ENCODE measurements at regions of chr11 and their contacts with region 1.

Region 1: DNA sequence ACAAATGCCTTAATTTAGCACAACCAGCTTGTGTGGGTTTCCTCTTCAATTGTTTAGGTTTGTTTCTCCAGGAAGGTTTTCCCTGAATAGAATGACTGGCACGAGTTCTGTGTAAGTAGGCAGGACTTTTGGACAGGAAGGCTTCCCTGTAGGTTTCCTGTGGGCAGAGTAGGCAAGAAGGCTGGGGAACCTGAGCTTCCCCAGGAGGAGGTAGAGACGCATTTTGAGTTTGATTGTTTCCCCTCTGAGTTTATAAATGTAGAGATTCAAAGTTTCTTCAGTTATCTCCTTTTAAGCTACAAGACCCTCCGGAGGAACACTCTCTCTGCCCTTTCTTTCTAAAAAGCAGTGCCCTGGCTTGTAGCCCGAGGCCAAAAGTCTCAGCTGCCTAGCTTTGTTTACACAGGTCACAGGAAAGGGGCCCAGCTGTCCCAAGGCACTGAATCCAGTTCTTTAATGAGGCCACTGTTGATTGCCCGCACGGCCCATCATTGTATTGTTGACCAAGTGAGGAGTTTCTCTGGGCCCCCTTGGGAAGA is 66.6 kb upstream of the RDX start:
- DNase-seq: no peak
- ATAC-seq: peak; percentile 73
- H3K4me3 ChIP-seq: no peak overlapping the region
- H3K27ac ChIP-seq: peak overlapping the region; percentile 62; the same call in 1 of the 2 replicates
- H3K4me1 ChIP-seq: peaks cover 7% of the 10 kb centered on the region
- H3K27me3 ChIP-seq: no peaks in the 10 kb centered on the region
- CTCF ChIP-seq: no peak
- EP300 ChIP-seq: no peak
- POLR2A ChIP-seq: no peak
- RAD21 ChIP-seq: no peak

Region 2: DNA sequence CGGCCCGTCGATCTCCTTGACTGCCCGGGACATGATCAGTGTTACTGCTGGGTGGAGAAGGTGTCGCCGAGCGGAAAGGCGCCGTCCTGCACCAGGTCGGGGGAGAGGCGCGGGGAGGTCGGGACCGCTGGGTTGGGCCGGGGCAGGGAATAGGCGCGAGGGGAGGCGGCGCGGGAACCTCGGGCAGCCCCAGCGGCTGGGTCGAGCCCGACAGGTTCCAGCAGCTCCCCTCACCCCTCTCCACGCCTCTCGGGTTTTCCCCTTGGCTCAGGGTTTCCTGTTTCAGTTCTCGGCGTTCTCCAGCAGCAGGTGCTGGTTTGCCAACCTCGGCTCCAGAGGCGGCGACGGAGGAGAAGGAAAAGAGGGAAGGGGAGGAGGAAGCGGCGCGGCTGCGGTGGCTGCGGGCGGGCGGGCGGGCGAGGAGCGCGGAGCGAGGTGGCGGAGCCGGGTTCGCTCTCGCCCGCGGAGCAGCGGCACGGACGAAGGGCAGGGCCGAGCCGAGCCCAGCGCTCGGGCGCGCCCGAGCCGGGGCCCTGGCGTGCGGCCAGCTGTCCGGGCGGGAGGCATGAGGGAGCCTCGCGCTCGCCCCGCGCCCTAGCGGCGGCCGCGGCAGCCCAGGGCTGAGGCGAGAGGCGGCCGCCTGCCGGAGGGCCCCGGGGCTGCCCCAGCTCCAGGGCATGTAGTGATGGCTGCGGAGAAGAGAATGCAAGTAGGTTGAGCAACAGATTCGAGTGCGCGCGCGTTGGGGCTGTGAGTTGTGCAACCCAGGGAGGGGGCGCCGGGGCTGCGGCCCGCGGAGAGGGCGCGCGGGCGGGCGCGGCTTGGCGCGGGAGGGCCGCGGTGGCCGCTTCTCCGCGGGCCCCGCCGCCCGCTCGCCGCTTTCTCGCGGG is 270.3 kb before region 1 on chr11 and contains the start of gene ZC3H12C:
- CTCF ChIA-PET with region 1: no interaction called
- POLR2A ChIA-PET with region 1: no interaction called
- RAD21 ChIA-PET with region 1: no interaction called
- SMC1A ChIA-PET with region 1: no interaction called
- in situ Hi-C with region 1: no loop called
- intact Hi-C with region 1: no loop called
- DNase-seq: no peak
- ATAC-seq: peak; percentile 60
- H3K4me3 ChIP-seq: peak within 1 kb of the TSS; percentile 72
- H3K27ac ChIP-seq: peak within 1 kb of the TSS; percentile 75
- H3K4me1 ChIP-seq: peaks cover 21% of the 10 kb centered on the region
- H3K27me3 ChIP-seq: no peaks in the 10 kb centered on the region
- CTCF ChIP-seq: peak; percentile 19 to 44 (median 40); a peak in 5 of 6 replicates
- EP300 ChIP-seq: peak; percentile 58 to 63; a peak in 2 of 4 replicates
- POLR2A ChIP-seq: peak; percentile 80
- RAD21 ChIP-seq: peak; percentile 49
- polyA plus RNA-seq, gene ZC3H12C: 0.31 to 0.68 TPM

Region 3: GRCh38 chr11:110207123-110207522 is 155.9 kb before region 1 on chr11:
- CTCF ChIA-PET with region 1: interaction called, 68 read pairs
- POLR2A ChIA-PET with region 1: no interaction called
- RAD21 ChIA-PET with region 1: interaction called, 58 read pairs
- SMC1A ChIA-PET with region 1: interaction called, 109 read pairs
- in situ Hi-C with region 1: no loop called
- intact Hi-C with region 1: no loop called
- DNase-seq: no peak
- ATAC-seq: no peak
- H3K4me3 ChIP-seq: no peak overlapping the region
- H3K27ac ChIP-seq: no peak overlapping the region
- H3K4me1 ChIP-seq: no peaks in the 10 kb centered on the region
- H3K27me3 ChIP-seq: no peaks in the 10 kb centered on the region
- CTCF ChIP-seq: no peak
- EP300 ChIP-seq: no peak
- POLR2A ChIP-seq: no peak
- RAD21 ChIP-seq: no peak

Region 4: DNA sequence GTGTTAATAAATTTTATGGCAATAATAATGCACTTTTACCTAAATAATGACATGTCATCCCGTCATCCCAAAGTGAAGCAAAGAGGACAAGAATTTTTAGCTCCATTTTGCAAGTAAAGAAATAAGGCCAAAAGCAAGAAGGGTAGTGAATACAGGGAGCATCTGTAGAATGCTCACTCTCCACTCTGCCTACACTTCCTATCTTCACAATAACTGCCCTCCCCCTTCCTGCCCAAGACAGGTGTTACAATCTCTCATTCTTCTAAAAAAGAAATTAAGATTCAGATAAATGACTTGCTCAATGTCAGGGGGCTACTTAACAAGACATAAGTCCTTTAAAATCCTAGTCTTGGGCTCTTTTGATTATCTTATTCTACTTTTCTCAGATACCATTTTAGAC is 75.5 kb before region 1 on chr11:
- CTCF ChIA-PET with region 1: interaction called, 10 read pairs
- POLR2A ChIA-PET with region 1: no interaction called
- RAD21 ChIA-PET with region 1: interaction called, 5 read pairs
- SMC1A ChIA-PET with region 1: interaction called, 13 read pairs
- in situ Hi-C with region 1: no loop called
- intact Hi-C with region 1: no loop called
- DNase-seq: no peak
- ATAC-seq: peak; percentile 65
- H3K4me3 ChIP-seq: no peak overlapping the region
- H3K27ac ChIP-seq: no peak overlapping the region
- H3K4me1 ChIP-seq: no peaks in the 10 kb centered on the region
- H3K27me3 ChIP-seq: no peaks in the 10 kb centered on the region
- CTCF ChIP-seq: no peak
- EP300 ChIP-seq: no peak
- POLR2A ChIP-seq: no peak
- RAD21 ChIP-seq: no peak

Region 5: GRCh38 chr11:110327508-110327907 is 35.5 kb before region 1 on chr11:
- CTCF ChIA-PET with region 1: interaction called, 5 read pairs
- POLR2A ChIA-PET with region 1: interaction called, 4 read pairs
- RAD21 ChIA-PET with region 1: interaction called, 12 read pairs
- SMC1A ChIA-PET with region 1: interaction called, 24 read pairs
- in situ Hi-C with region 1: no loop called
- intact Hi-C with region 1: no loop called
- DNase-seq: no peak
- ATAC-seq: peak; percentile 41
- H3K4me3 ChIP-seq: peak overlapping the region; percentile 64
- H3K27ac ChIP-seq: peak overlapping the region; percentile 28; the same call in 1 of the 2 replicates
- H3K4me1 ChIP-seq: peaks cover 8% of the 10 kb centered on the region; the same call in 1 of the 2 replicates
- H3K27me3 ChIP-seq: no peaks in the 10 kb centered on the region
- CTCF ChIP-seq: no peak
- EP300 ChIP-seq: no peak
- POLR2A ChIP-seq: no peak
- RAD21 ChIP-seq: no peak

Region 6: DNA sequence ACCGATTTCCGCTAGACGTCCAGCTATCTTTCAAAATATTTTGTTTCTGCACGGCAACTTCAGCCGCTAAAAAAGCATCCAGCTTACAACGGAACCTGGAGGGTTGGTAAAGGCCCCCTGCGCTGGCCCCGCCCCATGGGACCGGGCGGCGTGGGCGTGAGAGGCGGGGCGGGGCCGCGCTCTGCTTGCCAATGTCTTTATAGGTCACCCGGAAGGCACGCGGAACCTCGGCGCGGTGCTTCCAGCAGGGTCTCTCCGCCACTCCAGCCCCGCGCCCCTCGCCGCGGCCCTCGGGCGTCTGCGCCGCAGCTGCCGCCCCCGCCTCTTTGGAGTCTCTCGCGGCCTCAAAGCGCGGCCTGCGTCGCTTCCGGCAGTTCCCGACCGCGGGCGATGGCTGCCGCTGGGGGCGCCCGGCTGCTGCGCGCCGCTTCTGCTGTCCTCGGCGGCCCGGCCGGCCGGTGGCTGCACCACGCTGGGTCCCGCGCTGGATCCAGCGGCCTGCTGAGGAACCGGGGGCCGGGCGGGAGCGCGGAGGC is 66.8 kb after region 1 on chr11 and contains the start of gene FDX1:
- CTCF ChIA-PET with region 1: interaction called, 10 read pairs
- POLR2A ChIA-PET with region 1: no interaction called
- RAD21 ChIA-PET with region 1: interaction called, 7 read pairs
- SMC1A ChIA-PET with region 1: interaction called, 16 read pairs
- in situ Hi-C with region 1: no loop called
- intact Hi-C with region 1: no loop called
- DNase-seq: peak; percentile 23
- ATAC-seq: peak; percentile 92
- H3K4me3 ChIP-seq: peak within 1 kb of the TSS; percentile 67
- H3K27ac ChIP-seq: peak within 1 kb of the TSS; percentile 47
- H3K4me1 ChIP-seq: peaks cover 10% of the 10 kb centered on the region
- H3K27me3 ChIP-seq: no peaks in the 10 kb centered on the region
- CTCF ChIP-seq: peak; percentile 41 to 61 (median 42); a peak in 5 of 6 replicates
- EP300 ChIP-seq: no peak
- POLR2A ChIP-seq: peak; percentile 78
- RAD21 ChIP-seq: no peak
- polyA plus RNA-seq, gene FDX1: 3.9 to 9.6 TPM

Measured in GM12878 (cell line).